Prostate gland (tissue), 2 donors: ENCODE measurements at regions of chr7 and their contacts with region 1.

Region 1: GRCh38 chr7:47435889-47436312 is 146.0 kb downstream of the TNS3 start:
- DNase-seq: peak; percentile 53
- H3K4me3 ChIP-seq: no peak overlapping the region
- H3K27ac ChIP-seq: no peak overlapping the region
- H3K4me1 ChIP-seq: no peaks in the 10 kb centered on the region
- H3K27me3 ChIP-seq: no peaks in the 10 kb centered on the region
- CTCF ChIP-seq: peak; percentile 26 to 73 (median 63)
- POLR2A ChIP-seq: no peak

Region 2: GRCh38 chr7:47818796-47819606 is 383.1 kb after region 1 on chr7:
- intact Hi-C with region 1: loop called (anchors 5 kb)
- DNase-seq: peak; percentile 54
- H3K4me3 ChIP-seq: no peak overlapping the region
- H3K27ac ChIP-seq: no peak overlapping the region
- H3K4me1 ChIP-seq: no peaks in the 10 kb centered on the region
- H3K27me3 ChIP-seq: no peaks in the 10 kb centered on the region
- CTCF ChIP-seq: peak; percentile 81 to 94 (median 92)
- POLR2A ChIP-seq: no peak